ENCODE measurements at regions of chr6 and their contacts with region 1.

Region 1: DNA sequence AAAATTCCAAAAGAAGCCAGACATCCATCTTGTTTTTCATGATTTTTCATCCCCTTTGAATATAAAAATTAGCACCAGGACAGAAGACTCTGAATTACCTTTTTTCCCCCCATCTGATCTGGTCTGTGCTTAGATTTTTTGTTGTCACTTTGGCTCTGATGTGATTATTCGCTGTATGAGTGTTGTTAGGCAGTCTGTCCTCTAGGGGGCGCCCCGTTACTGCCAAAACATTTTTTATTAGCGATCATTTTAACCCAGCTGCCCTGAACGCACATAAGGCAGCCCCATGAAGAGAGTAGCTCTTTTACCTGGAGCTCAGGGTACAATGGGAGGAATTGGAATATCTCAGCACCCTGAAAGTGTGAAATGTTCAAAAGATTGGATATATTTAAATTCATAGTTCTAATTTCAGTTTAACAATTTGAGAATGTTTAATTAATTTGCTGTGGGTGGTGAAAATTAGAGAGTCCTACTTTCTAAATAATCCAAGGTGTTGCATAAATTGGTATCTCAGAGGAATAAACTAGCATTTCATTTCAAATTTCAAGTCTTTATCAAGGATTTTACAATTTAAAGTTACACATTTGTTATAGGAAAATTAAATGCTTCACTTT is 60.8 kb downstream of the PRPH2 start:
- DNase-seq: peak; percentile 89

Region 2: GRCh38 chr6:42352856-42353564 is 308.6 kb before region 1 on chr6:
- in situ Hi-C with region 1: no loop called
- DNase-seq: no peak

Region 3: GRCh38 chr6:42572523-42572922 is 89.1 kb before region 1 on chr6:
- in situ Hi-C with region 1: no loop called
- DNase-seq: peak; percentile 25

Region 4: DNA sequence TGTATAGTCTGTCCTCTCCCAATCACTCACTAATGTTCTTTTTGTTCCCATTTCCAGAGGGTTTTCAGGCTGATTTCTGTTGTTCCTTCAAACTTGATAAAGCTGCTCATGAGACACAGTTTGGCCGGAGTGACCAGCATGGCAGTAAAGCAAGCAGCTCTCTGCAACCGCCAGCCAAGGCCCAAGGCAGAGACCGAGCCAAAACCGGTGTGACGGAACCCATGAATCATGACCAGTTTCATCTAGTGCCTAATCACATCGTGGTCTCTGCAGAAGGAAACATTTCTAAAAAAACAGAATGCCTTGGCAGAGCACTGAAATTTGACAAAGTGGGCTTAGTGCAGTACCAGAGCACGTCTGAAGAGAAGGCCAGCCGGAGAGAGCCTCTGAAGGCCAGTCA is 203.0 kb after region 1 on chr6:
- in situ Hi-C with region 1: loop called (anchors 25 kb)
- DNase-seq: no peak

Region 5: GRCh38 chr6:43203029-43203717 is 541.5 kb after region 1 on chr6:
- in situ Hi-C with region 1: no loop called
- DNase-seq: no peak

Region 6: GRCh38 chr6:43395776-43396175 is 734.1 kb after region 1 on chr6:
- in situ Hi-C with region 1: no loop called
- DNase-seq: peak; percentile 19

Measured in G401 (cell line).